Posterior cingulate gyrus (tissue), 11 donors: ENCODE measurements at regions of chr7 and their contacts with region 1.

Region 1: DNA sequence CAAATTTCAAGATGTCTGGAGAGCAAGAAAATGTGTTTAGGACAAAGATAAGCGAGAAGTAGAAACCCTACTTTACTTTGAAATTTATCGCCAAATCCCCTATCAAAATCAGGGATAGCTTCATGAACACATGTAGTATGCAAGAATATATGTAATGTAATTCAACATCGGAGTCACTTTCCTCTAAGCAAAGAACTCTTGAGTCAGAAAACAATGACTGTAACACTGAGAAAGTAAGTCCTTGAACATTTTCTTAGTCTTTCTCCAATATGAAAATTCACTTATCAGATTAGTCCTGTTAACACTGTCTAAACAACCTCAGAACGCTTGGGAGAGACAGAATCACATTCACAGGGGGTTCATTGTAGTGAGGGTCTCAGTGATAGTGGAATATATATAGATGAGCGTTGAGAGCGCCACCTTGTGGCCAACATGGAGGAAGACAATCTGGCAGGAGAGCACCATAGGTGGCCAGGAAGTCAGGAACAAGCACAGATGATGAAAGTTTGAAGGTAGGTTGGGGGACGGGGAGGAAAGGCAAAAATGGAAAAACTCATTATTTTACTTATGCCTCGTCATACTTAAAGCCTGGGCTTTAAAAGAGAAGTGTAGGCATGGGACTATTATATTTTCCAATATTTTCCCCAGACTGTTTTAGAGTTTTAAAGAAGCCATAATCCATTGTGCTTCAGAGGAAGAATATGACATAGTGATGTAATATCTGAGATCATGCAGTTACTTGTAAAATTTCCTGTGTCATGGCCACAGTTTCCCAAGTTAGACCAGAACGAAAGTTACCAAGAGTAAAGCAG is 115.5 kb upstream of the GNAI1 start:
- DNase-seq: peak in 8 of 10 donors; percentile 12 to 88 (median 40)

Region 2: DNA sequence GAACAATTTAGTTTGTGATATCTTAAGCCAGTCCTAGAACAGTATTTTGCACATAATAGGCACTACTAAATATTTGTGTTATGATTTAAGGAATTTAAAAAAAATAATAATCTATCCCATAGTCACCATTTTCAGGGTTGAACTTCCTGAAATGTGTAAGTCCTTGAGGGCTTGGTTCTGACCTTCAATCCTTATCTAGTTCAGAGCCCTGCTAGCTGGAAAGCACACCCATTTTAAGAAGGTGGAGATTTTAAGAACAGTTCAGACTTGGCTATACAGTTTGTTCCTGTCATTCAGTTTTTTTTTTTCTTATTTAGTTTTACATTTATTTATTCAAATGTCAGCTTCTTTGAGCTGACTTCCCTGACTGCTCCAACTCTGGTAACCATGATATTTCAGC is 382.3 kb before region 1 on chr7:
- intact Hi-C with region 1: no loop called
- DNase-seq: no peak

Region 3: DNA sequence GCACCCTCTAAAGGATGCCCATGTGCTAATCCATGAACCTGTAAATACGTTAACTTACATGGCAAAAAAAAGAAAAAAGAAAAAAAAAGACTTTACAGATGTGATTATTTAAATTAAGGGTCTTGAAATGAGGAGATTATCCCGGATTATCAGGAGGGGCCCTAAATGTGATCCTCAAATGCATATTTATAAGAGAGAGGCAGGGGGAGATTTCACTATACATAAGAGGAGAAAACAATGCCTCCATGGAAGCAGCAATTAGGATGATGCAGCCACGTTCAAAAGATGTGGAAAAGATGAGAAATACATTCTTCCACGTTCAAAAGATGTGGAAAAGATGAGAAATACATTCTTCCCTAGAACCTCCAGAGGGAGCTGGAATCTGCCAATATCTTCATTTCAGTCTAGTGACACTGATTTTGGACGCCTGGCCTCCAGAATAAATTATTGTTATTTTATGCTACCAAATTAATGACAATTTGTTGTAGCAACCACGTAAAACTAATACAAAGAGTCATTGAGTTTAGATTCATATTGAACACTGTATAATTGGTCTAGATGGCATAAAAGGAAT is 212.9 kb before region 1 on chr7:
- intact Hi-C with region 1: loop called (anchors 5 kb)
- DNase-seq: no peak